B cell (primary cell): ENCODE measurements at regions of chr16 and their contacts with region 1.

Region 1: DNA sequence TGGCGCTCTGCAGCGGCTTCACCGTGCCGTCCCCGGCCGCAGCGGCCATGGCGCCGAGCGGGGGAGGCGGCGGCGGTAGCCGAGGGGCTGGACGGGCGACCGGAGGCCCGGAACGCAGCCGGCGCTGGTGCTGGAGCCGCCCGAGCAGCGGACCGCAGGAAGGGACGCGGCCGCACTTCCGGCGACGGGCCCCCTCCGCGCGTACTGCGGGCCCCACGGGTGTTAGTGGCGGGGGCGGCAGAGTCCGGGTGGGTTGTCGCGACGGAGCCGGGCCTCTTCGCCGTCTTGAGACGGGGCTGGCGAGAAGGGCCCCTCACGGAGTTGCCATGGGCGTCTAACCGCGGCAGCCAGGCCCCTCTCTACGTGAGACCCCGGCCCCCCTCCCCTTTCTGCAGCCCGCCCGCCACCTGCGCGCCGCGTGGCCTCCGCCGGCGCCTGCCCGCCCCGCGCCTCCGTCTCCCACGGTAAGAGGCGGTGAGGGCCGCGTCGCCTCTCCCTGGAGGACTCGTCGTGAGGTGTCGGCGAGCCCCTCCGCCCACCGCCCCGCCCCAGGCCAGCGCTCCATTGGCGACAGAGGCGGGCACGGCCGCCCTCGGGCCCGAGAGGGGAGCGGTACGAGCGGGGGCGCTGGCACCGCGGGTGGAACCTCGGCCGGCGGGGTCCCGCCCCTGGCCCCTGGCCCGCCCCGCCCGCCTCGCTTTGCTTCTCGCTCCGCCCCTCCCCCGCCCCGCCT is at the starts of genes VPS9D1 and ZNF276:
- DNase-seq: peak; percentile 90
- ATAC-seq: peak; percentile 71
- H3K4me3 ChIP-seq: peak within 1 kb of the TSS; percentile 61 to 97 (median 72)
- H3K4me3 Mint-ChIP-seq: peak within 1 kb of the TSS; percentile 88
- H3K27ac ChIP-seq: peak within 1 kb of the TSS; percentile 59 to 92
- H3K27ac Mint-ChIP-seq: peak within 1 kb of the TSS; percentile 92
- H3K4me1 ChIP-seq: peaks cover 27 to 34% of the 10 kb centered on the region in 2 donors
- H3K4me1 Mint-ChIP-seq: peaks cover 26% of the 10 kb centered on the region
- H3K27me3 ChIP-seq: no peaks in the 10 kb centered on the region
- H3K27me3 Mint-ChIP-seq: no peaks in the 10 kb centered on the region
- CTCF ChIP-seq: no peak
- total RNA-seq, gene VPS9D1: 14.6 and 15.1 TPM in 2 replicates
- total RNA-seq, gene ZNF276: 82.7 and 87.3 TPM in 2 replicates

Region 2: GRCh38 chr16:89686520-89687091 is 34.4 kb before region 1 on chr16 and contains the start of gene CDK10:
- CTCF ChIA-PET with region 1: no interaction called
- POLR2A ChIA-PET with region 1: no interaction called
- intact Hi-C with region 1: loop called (anchors 5 kb)
- DNase-seq: peak; percentile 94
- ATAC-seq: peak; percentile 90
- H3K4me3 ChIP-seq: peak within 1 kb of the TSS; percentile 52 to 96 (median 78)
- H3K4me3 Mint-ChIP-seq: peak within 1 kb of the TSS; percentile 96
- H3K27ac ChIP-seq: peak within 1 kb of the TSS; percentile 54 to 83
- H3K27ac Mint-ChIP-seq: peak within 1 kb of the TSS; percentile 97
- H3K4me1 ChIP-seq: peaks cover 7 to 15% of the 10 kb centered on the region in 2 donors
- H3K4me1 Mint-ChIP-seq: peaks cover 18% of the 10 kb centered on the region
- H3K27me3 ChIP-seq: no peaks in the 10 kb centered on the region
- H3K27me3 Mint-ChIP-seq: no peaks in the 10 kb centered on the region
- CTCF ChIP-seq: no peak
- total RNA-seq, gene CDK10: 114 and 119 TPM in 2 replicates

Region 3: GRCh38 chr16:89764711-89765201 is 43.8 kb after region 1 on chr16:
- CTCF ChIA-PET with region 1: no interaction called
- POLR2A ChIA-PET with region 1: no interaction called
- intact Hi-C with region 1: loop called (anchors 2 kb)
- DNase-seq: peak; percentile 89
- ATAC-seq: peak; percentile 88
- H3K4me3 ChIP-seq: peak overlapping the region; percentile 35 to 76 (median 56)
- H3K4me3 Mint-ChIP-seq: peak overlapping the region; percentile 95
- H3K27ac ChIP-seq: peak overlapping the region; percentile 67 to 86
- H3K27ac Mint-ChIP-seq: peak overlapping the region; percentile 97
- H3K4me1 ChIP-seq: peaks cover 37 to 52% of the 10 kb centered on the region in 2 donors
- H3K4me1 Mint-ChIP-seq: peaks cover 51% of the 10 kb centered on the region
- H3K27me3 ChIP-seq: no peaks in the 10 kb centered on the region
- H3K27me3 Mint-ChIP-seq: no peaks in the 10 kb centered on the region
- CTCF ChIP-seq: no peak

Region 4: DNA sequence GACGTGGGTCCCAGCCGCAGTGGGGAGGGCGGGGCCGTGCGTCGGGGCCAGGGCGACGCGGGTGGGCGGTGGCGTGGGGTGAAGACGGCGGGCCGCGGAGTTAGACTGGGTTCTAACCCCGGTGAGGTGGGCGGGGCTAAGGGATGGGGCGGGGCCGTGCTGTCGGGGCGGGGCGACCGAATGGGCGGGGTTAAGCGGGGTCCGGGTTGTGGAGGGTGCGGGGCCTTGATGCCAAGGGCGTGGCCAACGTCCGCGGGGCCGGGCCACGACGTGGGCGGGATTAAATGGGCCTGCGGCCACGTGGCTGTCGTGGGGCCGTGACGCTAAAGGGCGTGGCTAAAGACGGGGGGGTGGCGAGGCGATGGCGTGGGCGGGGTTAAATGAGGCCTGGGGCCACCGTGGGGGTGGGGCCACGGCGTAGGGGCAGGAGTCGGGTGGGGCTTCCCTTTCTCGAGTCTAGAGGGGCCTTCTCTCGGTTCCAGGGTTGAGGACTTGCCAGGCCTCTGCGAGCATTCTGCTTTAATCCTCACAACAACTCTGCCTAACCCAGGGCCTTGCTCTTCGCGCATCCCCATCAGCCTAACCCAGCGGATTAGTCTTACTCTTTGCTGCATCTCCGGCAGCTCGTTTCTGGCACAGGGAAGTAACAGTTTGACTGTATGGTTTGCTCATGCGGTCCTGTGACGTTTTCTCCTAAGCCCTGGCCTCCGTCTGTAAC is 153.2 kb after region 1 on chr16:
- CTCF ChIA-PET with region 1: no interaction called
- POLR2A ChIA-PET with region 1: interaction called, 3 read pairs
- intact Hi-C with region 1: loop called (anchors 1 kb)
- DNase-seq: peak; percentile 99
- ATAC-seq: peak; percentile 82
- H3K4me3 ChIP-seq: peak overlapping the region in 4 of 5 experiments; percentile 92 to 99 (median 97)
- H3K4me3 Mint-ChIP-seq: peak overlapping the region; percentile 95
- H3K27ac ChIP-seq: peak overlapping the region; percentile 100
- H3K27ac Mint-ChIP-seq: peak overlapping the region; percentile 99
- H3K4me1 ChIP-seq: peaks cover 14 to 19% of the 10 kb centered on the region in 2 donors
- H3K4me1 Mint-ChIP-seq: peaks cover 16% of the 10 kb centered on the region
- H3K27me3 ChIP-seq: no peaks in the 10 kb centered on the region
- H3K27me3 Mint-ChIP-seq: no peaks in the 10 kb centered on the region
- CTCF ChIP-seq: no peak